Breast epithelium (tissue), 4 donors: ENCODE measurements at regions of chr14 and their contacts with region 1.

Region 1: DNA sequence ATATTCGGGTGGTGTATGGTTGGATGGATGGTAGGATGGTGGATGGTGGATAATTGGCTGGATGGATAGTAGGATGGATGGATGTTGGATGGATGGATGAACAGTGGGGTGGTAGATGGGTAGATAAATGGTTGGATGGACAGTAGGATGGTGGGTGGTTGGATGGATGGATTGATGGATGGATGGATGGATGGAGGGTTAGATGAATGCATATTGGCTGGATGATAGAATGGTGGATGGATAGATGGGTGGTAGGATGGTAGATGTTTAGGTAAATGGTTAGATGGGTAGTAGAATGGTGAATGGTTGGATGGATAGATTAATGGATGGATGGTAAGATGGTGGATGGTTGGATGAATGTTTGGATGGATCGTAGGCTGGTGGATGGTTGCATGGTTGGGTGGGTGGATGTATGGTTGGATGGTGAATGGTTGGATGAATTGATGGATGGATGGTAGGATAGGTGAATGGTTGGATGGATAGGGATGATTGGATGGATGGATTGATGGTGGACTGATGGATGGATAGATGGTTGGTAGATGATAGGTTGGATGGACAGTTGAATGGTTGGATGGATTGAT is 23.6 kb downstream of the ZBTB42 start:
- DNase-seq: no peak
- H3K4me3 ChIP-seq: no peak overlapping the region
- H3K27ac ChIP-seq: no peak overlapping the region
- H3K4me1 ChIP-seq: peaks cover 10% of the 10 kb centered on the region in 2 donors
- H3K27me3 ChIP-seq: no peaks in the 10 kb centered on the region
- CTCF ChIP-seq: no peak
- POLR2A ChIP-seq: no peak

Region 2: GRCh38 chr14:104770851-104771272 is 53.6 kb before region 1 on chr14:
- intact Hi-C with region 1: loop called (anchors 2 kb)
- DNase-seq: no peak
- H3K4me3 ChIP-seq: no peak overlapping the region
- H3K27ac ChIP-seq: no peak overlapping the region
- H3K4me1 ChIP-seq: peaks cover 0 to 5% of the 10 kb centered on the region in 2 donors
- H3K27me3 ChIP-seq: no peaks in the 10 kb centered on the region
- CTCF ChIP-seq: peak in 2 of 3 donors; percentile 18 to 44
- POLR2A ChIP-seq: no peak